ENCODE measurements at regions of chr1 and their contacts with region 1.

Region 1: GRCh38 chr1:227787513-227788270 is 27.8 kb upstream of the PRSS38 start:
- DNase-seq: peak; percentile 86
- H3K4me3 Mint-ChIP-seq: peak overlapping the region; percentile 82
- H3K27ac Mint-ChIP-seq: peak overlapping the region; percentile 34
- H3K4me1 Mint-ChIP-seq: peaks cover 23% of the 10 kb centered on the region
- H3K27me3 Mint-ChIP-seq: peaks cover 9% of the 10 kb centered on the region

Region 2: GRCh38 chr1:226940029-226940805 is 847.5 kb before region 1 on chr1 and contains the start of gene COQ8A:
- intact Hi-C with region 1: loop called (anchors 10 kb)
- DNase-seq: peak; percentile 100
- H3K4me3 Mint-ChIP-seq: peak within 1 kb of the TSS; percentile 89
- H3K27ac Mint-ChIP-seq: peak within 1 kb of the TSS; percentile 97
- H3K4me1 Mint-ChIP-seq: peaks cover 41% of the 10 kb centered on the region
- H3K27me3 Mint-ChIP-seq: no peaks in the 10 kb centered on the region
- total RNA-seq, gene COQ8A: 33.1 and 33.8 TPM in 2 replicates

Region 3: DNA sequence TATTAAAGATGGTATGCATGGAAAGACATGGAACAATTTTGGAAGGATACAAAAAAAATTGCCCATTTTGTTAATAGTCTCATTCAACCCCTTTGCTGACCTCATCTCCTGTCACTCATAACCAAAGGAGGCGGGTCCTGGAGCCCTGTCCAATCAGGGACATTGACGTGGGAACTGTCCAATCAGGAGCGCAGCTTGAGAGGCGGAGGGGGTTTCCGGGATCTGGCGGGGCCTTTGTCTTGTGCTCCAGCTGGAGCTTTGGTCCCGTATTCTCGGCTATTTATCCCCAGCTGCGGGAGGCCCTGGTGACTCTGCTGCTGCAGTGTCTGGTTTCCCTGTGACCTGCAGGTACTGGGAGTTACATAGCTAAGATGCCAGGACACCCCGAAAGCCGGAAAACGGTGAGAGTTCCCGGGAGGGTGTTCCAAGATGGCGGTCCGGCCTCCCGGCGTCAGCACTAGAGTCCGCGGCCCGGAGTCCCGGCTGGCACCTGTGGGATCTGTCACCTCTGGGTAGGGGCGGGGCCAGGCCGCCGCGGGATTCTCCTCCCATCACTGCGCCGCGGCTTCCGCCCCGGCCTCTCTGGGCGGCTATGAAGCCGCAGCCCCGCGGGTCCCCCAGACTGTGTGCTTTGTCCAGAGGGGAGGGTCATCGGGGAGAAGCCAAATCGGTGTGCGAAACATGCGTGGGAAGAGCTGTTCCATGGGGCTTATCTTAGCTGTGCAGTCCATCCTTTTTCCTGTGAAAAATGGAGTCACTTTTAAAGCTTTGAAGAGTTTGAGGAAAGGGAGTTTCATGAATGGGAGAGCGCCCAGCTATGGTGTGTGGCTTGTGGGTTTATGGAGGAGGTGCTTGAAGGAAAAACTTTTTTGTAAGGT is 224.1 kb before region 1 on chr1 and contains the start of gene ZNF678:
- intact Hi-C with region 1: loop called (anchors 1 kb)
- DNase-seq: peak; percentile 76
- H3K4me3 Mint-ChIP-seq: peak within 1 kb of the TSS; percentile 87
- H3K27ac Mint-ChIP-seq: peak within 1 kb of the TSS; percentile 88
- H3K4me1 Mint-ChIP-seq: peaks cover 22% of the 10 kb centered on the region
- H3K27me3 Mint-ChIP-seq: peaks cover 30% of the 10 kb centered on the region
- total RNA-seq, gene ZNF678: 4.2 and 5.0 TPM in 2 replicates

Region 4: GRCh38 chr1:227734856-227735538 is 52.7 kb before region 1 on chr1 and contains the starts of genes JMJD4 and SNAP47:
- intact Hi-C with region 1: loop called (anchors 1 kb)
- DNase-seq: peak; percentile 93
- H3K4me3 Mint-ChIP-seq: peak within 1 kb of the TSS; percentile 98
- H3K27ac Mint-ChIP-seq: peak within 1 kb of the TSS; percentile 97
- H3K4me1 Mint-ChIP-seq: peaks cover 25% of the 10 kb centered on the region
- H3K27me3 Mint-ChIP-seq: no peaks in the 10 kb centered on the region
- total RNA-seq, gene JMJD4: 33.9 and 37.5 TPM in 2 replicates
- total RNA-seq, gene SNAP47: 32.2 and 33.7 TPM in 2 replicates

Region 5: DNA sequence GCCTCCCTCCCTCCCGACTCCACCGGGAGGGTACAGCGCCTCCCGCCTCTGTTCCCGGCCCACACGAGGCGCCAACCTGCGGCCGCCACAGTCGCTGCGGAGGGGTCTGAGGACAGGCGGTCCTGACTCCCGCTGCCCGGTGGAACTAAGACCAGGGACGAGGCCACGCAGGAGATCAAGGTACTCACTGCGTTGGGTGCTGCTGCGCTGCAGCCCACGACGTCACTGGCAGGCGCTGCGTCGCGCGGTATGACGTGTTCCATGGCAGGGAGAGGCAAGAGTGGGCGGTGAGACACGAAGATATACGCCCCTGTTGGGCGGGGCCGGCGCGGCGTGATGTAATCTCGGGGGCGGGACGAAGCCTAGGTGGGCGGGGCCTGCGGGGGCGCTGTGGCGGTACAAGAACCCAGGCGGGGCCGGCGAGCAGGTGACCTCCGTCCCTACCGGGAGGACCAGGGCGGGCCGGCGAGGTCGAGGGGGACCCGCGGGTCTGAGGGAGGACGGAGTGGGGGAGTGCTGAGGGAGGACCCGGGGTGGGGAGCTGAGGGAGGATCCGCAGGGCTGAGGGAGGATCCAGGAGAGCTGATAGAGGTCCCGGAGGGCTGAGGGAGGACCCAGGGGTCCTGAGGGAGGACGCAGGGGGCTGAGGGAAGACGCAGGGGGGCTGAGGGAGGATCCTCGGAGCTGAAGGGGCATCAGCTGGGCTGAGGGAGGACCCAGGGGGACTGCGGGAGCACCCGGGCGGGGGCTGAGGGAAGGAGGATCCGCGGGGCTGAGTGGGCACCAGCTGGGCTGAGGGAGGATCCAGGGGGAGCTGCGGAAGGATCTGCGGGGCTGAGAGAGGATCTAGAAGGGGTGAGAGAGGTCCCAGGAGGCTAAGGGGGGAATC is 321.6 kb after region 1 on chr1 and contains the start of gene MRPL55:
- intact Hi-C with region 1: loop called (anchors 5 kb)
- DNase-seq: peak; percentile 99
- H3K4me3 Mint-ChIP-seq: peak within 1 kb of the TSS; percentile 87
- H3K27ac Mint-ChIP-seq: peak within 1 kb of the TSS; percentile 89
- H3K4me1 Mint-ChIP-seq: peaks cover 28% of the 10 kb centered on the region
- H3K27me3 Mint-ChIP-seq: peaks cover 3% of the 10 kb centered on the region
- total RNA-seq, gene MRPL55: 53.3 and 61.7 TPM in 2 replicates

Region 6: GRCh38 chr1:228275739-228276421 is 488.2 kb after region 1 on chr1:
- intact Hi-C with region 1: loop called (anchors 1 kb)
- DNase-seq: peak; percentile 83
- H3K4me3 Mint-ChIP-seq: peak overlapping the region; percentile 73
- H3K27ac Mint-ChIP-seq: no peak overlapping the region
- H3K4me1 Mint-ChIP-seq: peaks cover 8% of the 10 kb centered on the region
- H3K27me3 Mint-ChIP-seq: no peaks in the 10 kb centered on the region

Measured in activated T-helper 1 cell treated with anti-CD3 and anti-CD28 coated beads, Interleukin-12 subunit alpha, Interleukin-12 subunit beta, Interleukin-2, Interleukin-4 antibody, amounts not matched to agents 30 ng/mL and 10 ng/mL and 1 ng/mL, durations not matched to agents 14 hours and 24 hours and 36 hours (primary cell).